MCF 10A (cell line): ENCODE measurements at regions of chr2 and their contacts with region 1.

Region 1: DNA sequence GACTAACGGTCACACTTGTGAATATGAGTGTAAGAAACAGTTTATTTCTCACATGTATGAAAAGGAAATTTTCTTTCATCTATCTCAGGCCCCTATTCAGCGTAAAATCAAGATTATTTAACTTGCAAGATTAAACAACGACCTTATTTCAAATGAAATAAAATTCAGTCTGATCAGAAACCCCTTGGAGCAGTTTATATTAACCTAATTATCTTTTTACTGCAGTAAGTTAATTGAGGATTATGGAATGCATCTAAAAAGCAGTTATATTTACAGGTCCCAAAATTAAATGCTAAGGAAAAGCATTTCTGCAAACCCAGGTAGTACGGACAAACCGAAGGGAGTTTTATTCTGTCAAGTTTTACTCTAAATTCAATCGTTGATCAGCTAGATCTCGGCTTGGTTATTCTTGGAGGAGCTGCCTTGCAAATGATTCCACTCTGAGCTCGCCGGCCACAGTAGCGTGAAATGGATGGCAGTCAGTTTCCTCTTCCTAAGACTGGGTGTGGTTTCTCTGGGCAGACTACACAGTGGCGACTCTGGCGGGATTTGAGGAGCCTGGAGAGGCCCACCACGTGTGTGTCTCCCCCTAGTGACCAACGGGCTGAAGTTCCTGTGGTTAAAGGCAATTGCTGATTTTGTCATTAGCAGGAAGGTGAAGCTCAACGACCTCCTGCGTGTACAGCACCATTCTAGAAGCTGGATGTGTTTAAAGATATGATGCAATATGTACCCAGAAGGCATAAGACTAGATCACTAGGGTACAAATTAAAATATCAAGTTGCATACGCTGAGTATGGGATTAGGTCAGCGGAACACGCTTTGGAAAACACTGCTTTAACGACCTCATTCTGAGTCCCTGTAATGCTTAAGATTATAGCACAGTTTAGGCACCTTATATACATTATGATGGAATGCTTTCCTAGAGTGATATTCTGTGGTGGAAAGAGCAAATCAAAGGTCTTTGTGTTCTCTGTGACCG is 36.4 kb downstream of the PRKRA start:
- DNase-seq: peak; percentile 98
- H3K4me3 Mint-ChIP-seq: peak overlapping the region; percentile 96
- H3K27ac Mint-ChIP-seq: peak overlapping the region; percentile 91
- H3K4me1 Mint-ChIP-seq: peaks cover 27% of the 10 kb centered on the region
- H3K27me3 Mint-ChIP-seq: no peaks in the 10 kb centered on the region
- CTCF ChIP-seq: peak; percentile 71

Region 2: GRCh38 chr2:177799531-177799930 is 615.0 kb before region 1 on chr2:
- CTCF ChIA-PET with region 1: interaction called, 5 read pairs
- POLR2A ChIA-PET with region 1: no interaction called
- intact Hi-C with region 1: loop called (anchors 10 kb)
- DNase-seq: peak; percentile 54
- H3K4me3 Mint-ChIP-seq: no peak overlapping the region
- H3K27ac Mint-ChIP-seq: no peak overlapping the region
- H3K4me1 Mint-ChIP-seq: no peaks in the 10 kb centered on the region
- H3K27me3 Mint-ChIP-seq: peaks cover 43% of the 10 kb centered on the region
- CTCF ChIP-seq: peak; percentile 62

Region 3: DNA sequence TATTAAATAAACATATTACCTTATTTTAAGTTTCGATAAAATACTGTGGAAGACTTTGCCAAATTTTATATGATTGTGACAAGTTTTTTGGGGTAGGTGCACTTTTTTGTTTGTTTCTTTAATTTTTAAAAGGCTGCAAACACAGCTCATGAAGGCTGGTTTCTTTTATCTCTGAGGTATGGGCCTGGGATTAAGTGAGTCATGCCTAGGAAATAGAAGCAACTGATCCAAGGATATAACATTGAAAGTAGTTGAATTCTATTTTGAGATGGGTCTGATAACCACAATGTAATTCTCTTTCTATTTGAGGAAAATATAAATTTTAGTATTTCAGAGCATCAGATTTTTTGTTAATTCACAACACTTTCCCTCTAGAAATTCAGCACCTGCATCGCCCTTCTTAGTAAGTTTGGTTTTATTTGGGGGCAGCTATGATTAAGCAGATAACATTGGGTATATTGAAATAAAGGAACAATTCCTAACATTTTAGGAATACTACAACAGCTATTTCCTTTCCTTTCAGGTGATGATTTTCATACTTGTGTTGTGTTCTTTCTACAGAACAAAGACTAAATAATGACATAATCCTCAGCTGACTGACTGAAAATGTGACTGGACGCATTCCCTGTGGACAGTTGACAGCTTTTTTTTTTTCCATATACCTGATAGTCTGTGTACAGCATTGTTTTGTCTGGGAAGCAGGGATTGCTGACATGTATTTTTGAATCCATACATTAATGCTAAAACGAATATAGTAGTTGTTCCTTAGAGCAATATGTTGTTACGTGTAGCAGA is 285.5 kb before region 1 on chr2:
- CTCF ChIA-PET with region 1: interaction called, 180 read pairs
- POLR2A ChIA-PET with region 1: interaction called, 27 read pairs
- intact Hi-C with region 1: loop called (anchors 1 kb)
- DNase-seq: no peak
- H3K4me3 Mint-ChIP-seq: no peak overlapping the region
- H3K27ac Mint-ChIP-seq: no peak overlapping the region
- H3K4me1 Mint-ChIP-seq: peaks cover 8% of the 10 kb centered on the region
- H3K27me3 Mint-ChIP-seq: no peaks in the 10 kb centered on the region
- CTCF ChIP-seq: no peak

Region 4: DNA sequence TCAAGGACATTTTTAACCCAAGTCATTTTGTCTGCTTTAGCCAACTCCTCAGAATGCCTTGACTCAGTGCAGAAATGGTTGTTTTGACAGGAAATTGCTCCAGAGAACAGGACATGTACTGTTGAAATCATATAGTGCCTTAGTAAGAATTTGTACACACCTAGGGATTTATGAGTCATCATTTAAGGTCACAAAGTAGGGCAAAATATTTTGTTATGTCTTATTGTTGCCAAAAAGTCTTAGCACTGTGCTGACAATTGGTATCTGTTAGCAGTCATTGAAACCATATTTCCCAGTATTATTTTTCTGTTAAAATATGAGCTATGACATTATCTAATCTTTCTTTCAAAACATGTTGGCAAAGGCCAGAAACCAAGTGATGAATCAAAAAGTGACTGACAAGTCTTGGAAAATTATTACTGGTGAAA is 115.8 kb before region 1 on chr2:
- CTCF ChIA-PET with region 1: interaction called, 15 read pairs
- POLR2A ChIA-PET with region 1: interaction called, 40 read pairs
- intact Hi-C with region 1: no loop called
- DNase-seq: peak; percentile 94
- H3K4me3 Mint-ChIP-seq: peak overlapping the region; percentile 62
- H3K27ac Mint-ChIP-seq: peak overlapping the region; percentile 89
- H3K4me1 Mint-ChIP-seq: peaks cover 22% of the 10 kb centered on the region
- H3K27me3 Mint-ChIP-seq: no peaks in the 10 kb centered on the region
- CTCF ChIP-seq: no peak

Region 5: GRCh38 chr2:178397002-178397605 is 17.5 kb before region 1 on chr2:
- CTCF ChIA-PET with region 1: interaction called, 101 read pairs
- POLR2A ChIA-PET with region 1: interaction called, 31 read pairs
- intact Hi-C with region 1: loop called (anchors 1 kb)
- DNase-seq: peak; percentile 60
- H3K4me3 Mint-ChIP-seq: no peak overlapping the region
- H3K27ac Mint-ChIP-seq: no peak overlapping the region
- H3K4me1 Mint-ChIP-seq: peaks cover 5% of the 10 kb centered on the region
- H3K27me3 Mint-ChIP-seq: no peaks in the 10 kb centered on the region
- CTCF ChIP-seq: peak; percentile 51

Region 6: DNA sequence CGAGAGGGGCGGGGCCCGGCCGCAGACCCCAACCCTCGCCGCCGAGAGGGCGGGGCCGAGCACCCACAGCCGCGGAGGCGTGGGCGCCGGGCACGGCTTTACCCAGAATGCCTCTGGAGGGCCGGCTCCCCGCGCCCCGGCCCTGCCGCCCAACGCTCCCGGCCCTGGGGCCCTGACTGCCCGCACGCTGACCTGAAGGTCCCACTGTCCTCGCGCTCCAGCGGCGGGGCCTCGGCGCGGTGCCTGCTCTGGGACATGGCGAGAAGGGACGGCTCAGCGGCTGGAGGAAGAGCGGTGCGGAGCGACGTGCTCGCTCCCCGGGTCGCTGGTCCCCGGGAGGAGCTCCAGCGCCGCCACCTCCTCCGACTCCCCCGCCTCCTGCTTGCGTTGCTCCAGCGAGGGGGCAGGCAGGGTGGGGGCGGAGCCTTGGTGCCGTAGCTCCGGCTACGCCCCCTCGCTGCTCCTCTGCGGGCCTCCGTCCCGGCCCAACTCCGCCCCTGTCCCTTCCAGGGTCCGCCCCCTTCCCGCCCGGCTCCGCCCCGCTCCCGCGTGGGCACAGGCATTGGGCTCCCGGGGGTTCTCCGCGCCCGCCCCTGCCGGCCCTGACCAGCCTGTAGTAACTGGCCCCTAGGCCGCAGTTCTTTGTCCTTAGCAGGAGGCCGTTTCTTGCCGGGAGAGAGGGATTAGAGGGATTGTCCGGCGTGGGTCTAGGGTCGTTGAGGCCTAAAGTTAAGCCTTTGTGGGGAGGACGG is 36.4 kb after region 1 on chr2 and contains the starts of genes PJVK and PRKRA:
- CTCF ChIA-PET with region 1: interaction called, 23 read pairs
- POLR2A ChIA-PET with region 1: interaction called, 64 read pairs
- intact Hi-C with region 1: no loop called
- DNase-seq: peak; percentile 95
- H3K4me3 Mint-ChIP-seq: peak within 1 kb of the TSS; percentile 88
- H3K27ac Mint-ChIP-seq: peak within 1 kb of the TSS; percentile 100
- H3K4me1 Mint-ChIP-seq: peaks cover 11% of the 10 kb centered on the region
- H3K27me3 Mint-ChIP-seq: no peaks in the 10 kb centered on the region
- CTCF ChIP-seq: no peak
- total RNA-seq, gene PJVK: 7.4 and 10.4 TPM in 2 replicates
- total RNA-seq, gene PRKRA: 51.4 and 58.9 TPM in 2 replicates

Region 7: GRCh38 chr2:178574777-178575176 is 160.2 kb after region 1 on chr2:
- CTCF ChIA-PET with region 1: no interaction called
- POLR2A ChIA-PET with region 1: no interaction called
- intact Hi-C with region 1: no loop called
- DNase-seq: no peak
- H3K4me3 Mint-ChIP-seq: no peak overlapping the region
- H3K27ac Mint-ChIP-seq: no peak overlapping the region
- H3K4me1 Mint-ChIP-seq: no peaks in the 10 kb centered on the region
- H3K27me3 Mint-ChIP-seq: no peaks in the 10 kb centered on the region
- CTCF ChIP-seq: no peak